ENCODE measurements at regions of chr19 and their contacts with region 1.

Region 1: DNA sequence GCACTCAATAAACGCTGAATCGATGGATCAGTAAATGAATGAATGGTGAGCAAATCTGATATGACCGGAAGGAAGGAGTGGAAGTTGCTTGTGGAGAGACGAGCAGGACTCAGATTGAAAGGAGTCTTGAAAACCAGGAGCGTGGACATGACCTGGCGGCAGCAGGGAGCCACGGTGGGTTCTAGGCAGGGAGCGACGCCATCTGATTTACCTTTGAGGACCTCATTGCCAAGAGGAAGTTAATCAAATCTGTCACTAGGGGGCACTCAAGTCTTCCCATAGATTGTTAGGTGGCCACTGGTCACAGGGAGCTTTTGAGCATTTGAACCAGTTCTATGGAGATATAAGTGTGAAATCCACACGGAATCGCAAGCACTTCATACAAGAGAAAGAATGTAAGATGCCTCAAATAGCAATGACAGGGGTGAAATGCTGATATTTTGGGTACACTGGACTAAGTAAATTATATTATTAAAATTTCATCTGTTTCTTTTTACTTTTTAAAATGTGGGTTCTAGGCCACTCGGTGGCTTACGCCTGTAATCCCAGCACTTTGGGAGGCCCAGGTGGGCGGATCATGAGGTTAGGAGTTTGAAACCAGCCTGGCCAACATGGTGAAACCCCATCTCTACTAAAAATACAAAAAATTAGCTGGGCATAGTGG is 9.2 kb upstream of the FBN3 start:
- DNase-seq: peak; percentile 89
- H3K4me3 ChIP-seq: no peak overlapping the region
- H3K27ac ChIP-seq: no peak overlapping the region
- H3K4me1 ChIP-seq: peaks cover 16% of the 10 kb centered on the region
- CTCF ChIP-seq: peak; percentile 88

Region 2: GRCh38 chr19:8017808-8018207 is 140.7 kb before region 1 on chr19:
- CTCF ChIA-PET with region 1: no interaction called
- POLR2A ChIA-PET with region 1: no interaction called
- intact Hi-C with region 1: loop called (anchors 10 kb)
- DNase-seq: peak; percentile 76
- H3K4me3 ChIP-seq: no peak overlapping the region
- H3K27ac ChIP-seq: no peak overlapping the region
- H3K4me1 ChIP-seq: peaks cover 4% of the 10 kb centered on the region
- CTCF ChIP-seq: peak; percentile 84

Region 3: GRCh38 chr19:8194528-8195267 is 36.2 kb after region 1 on chr19:
- CTCF ChIA-PET with region 1: no interaction called
- POLR2A ChIA-PET with region 1: no interaction called
- intact Hi-C with region 1: loop called (anchors 5 kb)
- DNase-seq: peak; percentile 84
- H3K4me3 ChIP-seq: peak overlapping the region; percentile 39
- H3K27ac ChIP-seq: peak overlapping the region; percentile 95
- H3K4me1 ChIP-seq: peaks cover 61% of the 10 kb centered on the region
- CTCF ChIP-seq: no peak

Region 4: GRCh38 chr19:8252922-8253589 is 94.5 kb after region 1 on chr19:
- CTCF ChIA-PET with region 1: no interaction called
- POLR2A ChIA-PET with region 1: interaction called, 3 read pairs
- intact Hi-C with region 1: loop called (anchors 1 kb)
- DNase-seq: peak; percentile 84
- H3K4me3 ChIP-seq: no peak overlapping the region
- H3K27ac ChIP-seq: no peak overlapping the region
- H3K4me1 ChIP-seq: no peaks in the 10 kb centered on the region
- CTCF ChIP-seq: peak; percentile 97

Region 5: GRCh38 chr19:8269724-8270123 is 111.2 kb after region 1 on chr19:
- CTCF ChIA-PET with region 1: no interaction called
- POLR2A ChIA-PET with region 1: no interaction called
- intact Hi-C with region 1: loop called (anchors 5 kb)
- DNase-seq: no peak
- H3K4me3 ChIP-seq: no peak overlapping the region
- H3K27ac ChIP-seq: no peak overlapping the region
- H3K4me1 ChIP-seq: peaks cover 27% of the 10 kb centered on the region
- CTCF ChIP-seq: no peak